MCF 10A (cell line): ENCODE measurements at regions of chr3 and their contacts with region 1.

Region 1: DNA sequence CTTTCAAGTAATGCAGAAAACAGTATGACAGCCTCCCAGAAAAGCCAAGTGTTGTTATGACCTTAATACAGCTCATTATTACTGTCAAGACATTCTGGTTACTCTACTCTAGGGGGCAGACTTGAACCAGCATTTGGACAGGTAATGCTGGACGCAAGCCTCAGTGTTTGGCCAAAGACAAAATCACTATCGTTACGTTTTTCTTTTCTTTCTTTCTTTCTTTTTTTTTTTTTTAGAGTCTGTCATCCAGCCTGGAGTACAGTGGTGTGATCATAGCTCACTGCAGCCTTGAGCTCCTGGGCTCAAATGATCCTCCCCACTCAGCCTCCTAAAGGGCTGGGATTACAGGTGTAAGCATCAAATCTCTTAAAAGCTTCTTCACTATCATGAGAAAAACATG is 29.4 kb upstream of the TMEM45A start:
- DNase-seq: peak; percentile 79
- H3K4me3 Mint-ChIP-seq: no peak overlapping the region
- H3K27ac Mint-ChIP-seq: no peak overlapping the region
- H3K4me1 Mint-ChIP-seq: peaks cover 9% of the 10 kb centered on the region
- H3K27me3 Mint-ChIP-seq: no peaks in the 10 kb centered on the region
- CTCF ChIP-seq: peak; percentile 88

Region 2: DNA sequence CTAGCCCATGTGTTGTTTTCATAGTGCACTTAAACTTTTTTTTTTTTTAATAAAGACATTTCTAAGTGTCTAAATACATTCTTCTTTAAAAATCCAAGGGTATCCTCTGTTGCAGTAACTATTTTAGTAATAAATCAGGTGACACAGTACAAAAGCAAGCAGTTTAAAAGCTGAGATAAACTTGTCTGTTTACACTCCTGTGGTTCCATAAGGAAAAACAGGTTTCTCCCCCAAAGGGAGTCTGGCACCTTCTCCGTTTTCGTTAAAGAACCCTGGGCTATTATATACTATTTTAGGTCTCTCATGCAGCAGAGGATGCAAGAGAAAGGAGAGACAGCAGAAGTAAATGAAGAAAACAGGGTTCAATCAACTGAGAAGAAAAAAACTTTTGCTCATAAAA is 13.8 kb before region 1 on chr3:
- CTCF ChIA-PET with region 1: interaction called, 12 read pairs
- POLR2A ChIA-PET with region 1: no interaction called
- intact Hi-C with region 1: no loop called
- DNase-seq: no peak
- H3K4me3 Mint-ChIP-seq: no peak overlapping the region
- H3K27ac Mint-ChIP-seq: no peak overlapping the region
- H3K4me1 Mint-ChIP-seq: no peaks in the 10 kb centered on the region
- H3K27me3 Mint-ChIP-seq: no peaks in the 10 kb centered on the region
- CTCF ChIP-seq: no peak

Region 3: DNA sequence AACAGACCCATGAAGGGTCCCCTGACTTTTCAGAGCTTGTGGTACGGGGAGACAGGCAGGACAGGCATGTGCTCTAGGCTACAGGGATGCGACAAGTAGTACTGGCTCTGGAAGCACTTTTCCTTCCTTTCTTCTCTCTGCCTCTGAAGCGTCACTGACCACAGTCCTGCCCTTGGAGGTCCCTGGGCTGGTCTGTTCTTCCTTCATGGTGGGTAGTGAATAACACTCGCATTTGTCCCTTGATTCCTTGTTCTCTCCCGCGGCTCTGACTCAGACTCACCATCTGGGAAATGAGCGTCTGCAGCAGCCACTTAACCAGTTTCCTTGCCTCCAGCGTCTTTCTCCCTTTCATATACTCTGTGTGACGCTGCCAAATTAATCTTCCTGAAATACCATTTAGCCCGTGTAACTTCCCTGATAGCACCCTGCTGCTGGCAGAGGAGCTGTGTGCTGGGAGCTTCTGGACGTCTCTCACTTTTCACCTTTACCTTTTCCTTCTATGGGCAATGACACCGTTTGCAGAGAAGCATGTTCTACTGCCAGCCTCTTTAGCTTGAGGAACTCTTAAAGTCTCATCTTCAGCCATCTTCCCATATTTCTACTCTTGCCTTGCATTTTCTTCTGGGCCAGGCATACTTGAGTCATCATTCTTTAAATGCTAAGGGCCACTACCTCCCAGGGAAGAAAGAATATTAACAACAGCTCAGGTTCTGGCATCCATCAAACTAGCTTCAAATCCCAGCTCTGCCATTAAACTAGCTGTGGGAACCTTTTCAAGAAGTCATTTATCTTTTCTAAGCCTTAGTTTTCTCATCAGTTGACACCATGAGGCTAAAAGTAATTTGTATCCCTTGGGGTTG is 63.0 kb after region 1 on chr3:
- CTCF ChIA-PET with region 1: interaction called, 16 read pairs
- POLR2A ChIA-PET with region 1: no interaction called
- intact Hi-C with region 1: no loop called
- DNase-seq: peak; percentile 91
- H3K4me3 Mint-ChIP-seq: peak overlapping the region; percentile 58
- H3K27ac Mint-ChIP-seq: peak overlapping the region; percentile 89
- H3K4me1 Mint-ChIP-seq: peaks cover 27% of the 10 kb centered on the region
- H3K27me3 Mint-ChIP-seq: no peaks in the 10 kb centered on the region
- CTCF ChIP-seq: no peak

Region 4: GRCh38 chr3:100590114-100590839 is 127.3 kb after region 1 on chr3:
- CTCF ChIA-PET with region 1: interaction called, 405 read pairs
- POLR2A ChIA-PET with region 1: interaction called, 18 read pairs
- intact Hi-C with region 1: loop called (anchors 1 kb)
- DNase-seq: peak; percentile 83
- H3K4me3 Mint-ChIP-seq: no peak overlapping the region
- H3K27ac Mint-ChIP-seq: no peak overlapping the region
- H3K4me1 Mint-ChIP-seq: peaks cover 8% of the 10 kb centered on the region
- H3K27me3 Mint-ChIP-seq: no peaks in the 10 kb centered on the region
- CTCF ChIP-seq: peak; percentile 75

Region 5: GRCh38 chr3:100708967-100709841 is 246.2 kb after region 1 on chr3 and contains the start of gene TFG:
- CTCF ChIA-PET with region 1: interaction called, 24 read pairs
- POLR2A ChIA-PET with region 1: interaction called, 7 read pairs
- intact Hi-C with region 1: loop called (anchors 1 kb)
- DNase-seq: peak; percentile 99
- H3K4me3 Mint-ChIP-seq: peak within 1 kb of the TSS; percentile 89
- H3K27ac Mint-ChIP-seq: peak within 1 kb of the TSS; percentile 96
- H3K4me1 Mint-ChIP-seq: peaks cover 44% of the 10 kb centered on the region
- H3K27me3 Mint-ChIP-seq: no peaks in the 10 kb centered on the region
- CTCF ChIP-seq: no peak
- total RNA-seq, gene TFG: 162 and 168 TPM in 2 replicates

Region 6: DNA sequence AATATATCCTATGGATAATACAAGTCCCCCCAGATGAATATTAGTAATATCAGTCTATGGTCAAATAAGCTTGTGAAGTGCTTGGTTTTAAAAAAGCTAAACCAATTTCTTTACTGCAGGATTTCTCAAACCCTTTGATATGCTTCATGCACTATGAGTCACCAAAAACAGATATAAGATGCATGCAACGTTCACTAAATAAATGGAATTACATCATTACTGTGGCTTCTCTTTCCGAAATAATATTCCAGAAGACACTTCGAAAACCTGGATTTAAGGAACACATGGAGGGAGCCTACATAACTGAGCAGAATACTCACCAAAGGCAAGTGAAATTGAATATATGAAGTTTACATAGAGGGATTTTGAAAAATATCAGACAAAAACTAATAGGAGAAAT is 656.5 kb after region 1 on chr3:
- CTCF ChIA-PET with region 1: no interaction called
- POLR2A ChIA-PET with region 1: no interaction called
- intact Hi-C with region 1: no loop called
- DNase-seq: peak; percentile 51
- H3K4me3 Mint-ChIP-seq: no peak overlapping the region
- H3K27ac Mint-ChIP-seq: no peak overlapping the region
- H3K4me1 Mint-ChIP-seq: peaks cover 15% of the 10 kb centered on the region
- H3K27me3 Mint-ChIP-seq: no peaks in the 10 kb centered on the region
- CTCF ChIP-seq: no peak